ENCODE measurements at regions of chr12 and their contacts with region 1.

Region 1: DNA sequence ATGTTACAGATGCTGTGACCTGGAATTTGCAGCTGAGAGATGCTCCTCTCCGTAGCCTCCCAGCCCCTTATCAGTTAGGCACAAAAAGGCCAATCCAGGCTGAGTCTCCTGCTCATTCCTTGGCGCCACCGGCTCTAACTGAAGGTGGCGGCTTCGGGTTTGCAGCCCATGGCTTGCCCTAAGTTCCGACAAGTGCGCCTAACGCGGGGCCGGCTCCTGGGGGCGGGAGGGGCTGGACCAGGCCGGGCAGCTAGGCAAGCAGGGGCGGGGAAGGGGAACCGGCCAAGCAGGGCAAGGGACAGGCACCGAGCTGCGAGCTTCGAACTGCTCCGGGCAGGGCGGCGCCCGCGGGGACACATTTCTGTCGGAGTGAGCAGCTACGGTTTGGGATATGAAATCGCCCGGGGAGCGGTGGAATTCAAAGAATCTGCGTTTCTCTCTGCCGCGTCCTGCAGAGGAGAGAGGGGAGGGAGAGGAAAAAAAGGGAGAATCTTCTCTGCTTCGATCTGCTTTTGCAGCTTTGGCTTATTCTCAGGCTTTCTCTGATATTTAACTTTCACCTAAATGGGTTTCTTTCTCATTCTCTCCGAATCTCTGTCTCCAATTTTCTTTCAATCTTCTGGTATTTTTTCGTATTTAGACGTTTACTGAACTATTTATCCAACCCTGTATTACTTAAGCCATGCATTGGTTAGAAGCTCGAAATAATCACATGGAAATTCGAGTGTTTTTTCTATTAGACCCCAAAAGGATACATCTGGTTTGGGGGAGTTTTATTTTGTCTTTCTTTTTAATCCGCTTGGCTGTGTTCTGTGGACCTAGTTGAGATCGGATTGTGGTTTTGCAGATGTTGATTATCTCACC is 1.6 kb upstream of the HOXC12 start:
- DNase-seq: no peak
- H3K4me3 Mint-ChIP-seq: no peak overlapping the region
- H3K27ac Mint-ChIP-seq: peak overlapping the region; percentile 44
- H3K4me1 Mint-ChIP-seq: no peaks in the 10 kb centered on the region
- H3K27me3 Mint-ChIP-seq: peaks cover 88% of the 10 kb centered on the region

Region 2: DNA sequence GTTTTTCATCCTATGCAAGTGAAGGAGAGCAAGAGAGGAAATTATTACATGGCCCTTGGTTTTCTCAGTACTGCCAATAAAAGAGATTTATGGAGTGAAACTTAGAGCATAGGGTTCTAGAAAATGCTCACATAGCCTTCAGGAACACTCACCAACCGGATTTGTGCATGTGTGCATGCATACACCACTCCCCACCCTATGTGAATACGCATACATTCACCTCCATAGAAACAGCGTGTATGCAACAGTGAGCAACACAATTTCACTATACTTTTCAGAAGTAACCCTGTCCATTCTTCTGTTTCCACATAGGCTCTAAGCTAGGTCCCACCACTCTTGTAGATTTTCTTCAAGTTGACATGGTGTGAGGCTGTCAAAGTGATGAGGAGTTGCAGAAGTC is 46.0 kb before region 1 on chr12:
- intact Hi-C with region 1: no loop called
- DNase-seq: no peak
- H3K4me3 Mint-ChIP-seq: no peak overlapping the region
- H3K27ac Mint-ChIP-seq: no peak overlapping the region
- H3K4me1 Mint-ChIP-seq: no peaks in the 10 kb centered on the region
- H3K27me3 Mint-ChIP-seq: peaks cover 24% of the 10 kb centered on the region

Region 3: GRCh38 chr12:53938326-53939140 is 14.6 kb before region 1 on chr12 and contains the start of gene HOXC13:
- intact Hi-C with region 1: loop called (anchors 2 kb)
- DNase-seq: no peak
- H3K4me3 Mint-ChIP-seq: no peak within 1 kb of the TSS
- H3K27ac Mint-ChIP-seq: peak within 1 kb of the TSS; percentile 31
- H3K4me1 Mint-ChIP-seq: no peaks in the 10 kb centered on the region
- H3K27me3 Mint-ChIP-seq: peaks cover 79% of the 10 kb centered on the region
- total RNA-seq, gene HOXC13: not detected in 2 replicates

Region 4: DNA sequence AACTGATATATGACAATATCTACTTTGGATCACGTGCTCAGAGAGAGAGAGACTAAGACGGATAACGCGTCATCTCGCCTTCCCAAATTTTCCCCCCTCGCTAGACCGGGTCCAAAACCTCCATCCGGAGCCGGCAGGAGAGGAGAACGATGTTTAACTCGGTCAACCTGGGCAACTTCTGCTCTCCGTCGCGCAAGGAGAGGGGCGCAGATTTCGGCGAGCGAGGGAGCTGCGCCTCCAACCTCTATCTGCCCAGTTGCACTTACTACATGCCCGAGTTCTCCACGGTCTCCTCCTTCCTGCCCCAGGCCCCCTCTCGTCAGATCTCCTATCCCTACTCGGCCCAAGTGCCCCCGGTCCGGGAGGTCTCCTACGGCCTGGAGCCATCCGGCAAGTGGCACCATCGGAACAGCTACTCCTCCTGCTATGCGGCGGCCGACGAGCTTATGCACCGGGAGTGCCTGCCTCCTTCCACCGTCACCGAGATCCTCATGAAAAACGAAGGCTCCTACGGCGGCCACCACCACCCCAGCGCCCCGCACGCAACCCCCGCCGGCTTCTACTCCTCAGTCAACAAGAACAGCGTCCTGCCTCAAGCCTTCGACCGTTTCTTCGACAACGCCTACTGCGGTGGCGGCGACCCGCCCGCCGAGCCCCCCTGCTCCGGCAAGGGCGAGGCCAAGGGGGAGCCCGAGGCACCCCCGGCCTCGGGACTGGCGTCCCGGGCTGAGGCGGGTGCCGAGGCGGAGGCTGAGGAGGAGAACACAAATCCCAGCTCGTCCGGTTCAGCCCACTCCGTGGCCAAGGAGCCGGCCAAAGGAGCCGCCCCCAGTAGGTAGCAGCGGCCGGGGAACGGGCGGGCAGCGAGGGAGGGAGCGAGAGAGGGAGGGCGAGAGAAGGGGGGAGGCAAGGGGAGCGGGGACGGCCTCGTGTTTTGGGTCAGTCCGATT is 20.3 kb after region 1 on chr12 and contains the start of gene HOXC11:
- intact Hi-C with region 1: loop called (anchors 2 kb)
- DNase-seq: no peak
- H3K4me3 Mint-ChIP-seq: peak within 1 kb of the TSS; percentile 37
- H3K27ac Mint-ChIP-seq: peak within 1 kb of the TSS; percentile 66
- H3K4me1 Mint-ChIP-seq: peaks cover 15% of the 10 kb centered on the region
- H3K27me3 Mint-ChIP-seq: peaks cover 89% of the 10 kb centered on the region
- total RNA-seq, gene HOXC11: not detected in 2 replicates

Region 5: DNA sequence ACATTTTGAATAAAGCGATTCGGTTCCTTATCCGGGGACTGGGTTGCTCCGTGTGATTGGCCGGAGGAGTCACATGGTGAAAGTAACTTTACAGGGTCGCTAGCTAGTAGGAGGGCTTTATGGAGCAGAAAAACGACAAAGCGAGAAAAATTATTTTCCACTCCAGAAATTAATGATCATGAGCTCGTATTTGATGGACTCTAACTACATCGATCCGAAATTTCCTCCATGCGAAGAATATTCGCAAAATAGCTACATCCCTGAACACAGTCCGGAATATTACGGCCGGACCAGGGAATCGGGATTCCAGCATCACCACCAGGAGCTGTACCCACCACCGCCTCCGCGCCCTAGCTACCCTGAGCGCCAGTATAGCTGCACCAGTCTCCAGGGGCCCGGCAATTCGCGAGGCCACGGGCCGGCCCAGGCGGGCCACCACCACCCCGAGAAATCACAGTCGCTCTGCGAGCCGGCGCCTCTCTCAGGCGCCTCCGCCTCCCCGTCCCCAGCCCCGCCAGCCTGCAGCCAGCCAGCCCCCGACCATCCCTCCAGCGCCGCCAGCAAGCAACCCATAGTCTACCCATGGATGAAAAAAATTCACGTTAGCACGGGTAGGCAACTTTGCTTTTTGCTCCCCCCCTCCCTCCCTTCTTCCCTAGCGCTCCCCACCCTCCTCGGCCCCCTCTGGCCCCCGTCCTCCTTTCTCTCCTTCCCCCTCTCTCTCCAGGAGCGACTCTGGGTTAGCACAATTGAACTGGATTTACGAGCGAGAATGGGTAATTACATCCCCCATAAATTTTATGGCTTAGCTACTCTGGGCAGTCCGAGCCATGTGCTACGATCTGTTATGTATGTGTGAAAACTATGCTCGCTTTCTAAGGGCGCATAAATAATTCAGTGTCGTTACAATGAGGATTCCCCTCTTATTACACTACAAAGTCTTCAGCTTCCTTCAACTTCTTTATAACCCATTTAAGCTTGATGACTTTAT is 100.9 kb after region 1 on chr12 and contains the start of gene HOXC4:
- intact Hi-C with region 1: loop called (anchors 5 kb)
- DNase-seq: no peak
- H3K4me3 Mint-ChIP-seq: peak within 1 kb of the TSS; percentile 57
- H3K27ac Mint-ChIP-seq: no peak within 1 kb of the TSS
- H3K4me1 Mint-ChIP-seq: peaks cover 18% of the 10 kb centered on the region
- H3K27me3 Mint-ChIP-seq: peaks cover 89% of the 10 kb centered on the region
- total RNA-seq, gene HOXC4: not detected in 2 replicates

Measured in activated T-helper 1 cell treated with anti-CD3 and anti-CD28 coated beads, Interleukin-12 subunit alpha, Interleukin-12 subunit beta, Interleukin-2, Interleukin-4 antibody, amounts not matched to agents 30 ng/mL and 10 ng/mL and 1 ng/mL, durations not matched to agents 14 hours and 24 hours and 36 hours (primary cell).